H1 (cell line): ENCODE measurements at regions of chr5 and their contacts with region 1.

Region 1: DNA sequence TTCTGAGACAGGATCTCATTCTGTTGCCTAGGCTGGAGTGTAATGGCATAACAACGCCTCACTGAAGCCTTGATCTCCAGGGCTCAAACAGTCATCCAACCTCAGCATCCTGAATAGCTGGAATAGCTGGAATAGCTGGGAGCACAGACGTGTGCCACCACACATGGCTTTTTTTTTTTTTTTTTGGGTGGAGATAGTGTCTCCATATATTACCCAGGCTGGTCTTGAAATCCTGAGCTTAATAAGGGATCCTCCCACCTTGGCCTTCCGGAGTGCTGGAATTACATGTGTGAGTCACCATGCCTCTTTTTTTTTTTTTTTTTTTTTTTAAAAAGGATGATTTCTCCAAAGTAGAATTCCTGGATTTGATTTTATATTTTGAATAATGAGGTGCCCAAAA is 60.7 kb downstream of the NSD1 start:
- DNase-seq: peak in 1 of 2 experiments; percentile 2
- H3K4me3 ChIP-seq: no peak overlapping the region
- H3K27ac ChIP-seq: no peak overlapping the region
- H3K4me1 ChIP-seq: no peaks in the 10 kb centered on the region
- H3K27me3 ChIP-seq: no peaks in the 10 kb centered on the region
- CTCF ChIP-seq: no peak
- EP300 ChIP-seq: no peak
- POLR2A ChIP-seq: no peak
- RAD21 ChIP-seq: no peak

Region 2: GRCh38 chr5:177209610-177210009 is 15.3 kb after region 1 on chr5:
- CTCF ChIA-PET with region 1: interaction called, 10 read pairs
- POLR2A ChIA-PET with region 1: interaction called, 4 read pairs
- DNase-seq: no peak
- H3K4me3 ChIP-seq: no peak overlapping the region
- H3K27ac ChIP-seq: no peak overlapping the region
- H3K4me1 ChIP-seq: no peaks in the 10 kb centered on the region
- H3K27me3 ChIP-seq: no peaks in the 10 kb centered on the region
- CTCF ChIP-seq: no peak
- EP300 ChIP-seq: no peak
- POLR2A ChIP-seq: no peak
- RAD21 ChIP-seq: no peak

Region 3: GRCh38 chr5:177431317-177432142 is 237.3 kb after region 1 on chr5:
- CTCF ChIA-PET with region 1: no interaction called
- POLR2A ChIA-PET with region 1: no interaction called
- DNase-seq: no peak
- H3K4me3 ChIP-seq: no peak overlapping the region
- H3K27ac ChIP-seq: no peak overlapping the region
- H3K4me1 ChIP-seq: peaks cover 0 to 14% (median 9%) of the 10 kb centered on the region in 4 experiments; a peak in 5 of 7 replicates
- H3K27me3 ChIP-seq: no peaks in the 10 kb centered on the region
- CTCF ChIP-seq: no peak
- EP300 ChIP-seq: no peak
- POLR2A ChIP-seq: no peak
- RAD21 ChIP-seq: no peak